ENCODE measurements at regions of chr18 and their contacts with region 1.

Region 1: DNA sequence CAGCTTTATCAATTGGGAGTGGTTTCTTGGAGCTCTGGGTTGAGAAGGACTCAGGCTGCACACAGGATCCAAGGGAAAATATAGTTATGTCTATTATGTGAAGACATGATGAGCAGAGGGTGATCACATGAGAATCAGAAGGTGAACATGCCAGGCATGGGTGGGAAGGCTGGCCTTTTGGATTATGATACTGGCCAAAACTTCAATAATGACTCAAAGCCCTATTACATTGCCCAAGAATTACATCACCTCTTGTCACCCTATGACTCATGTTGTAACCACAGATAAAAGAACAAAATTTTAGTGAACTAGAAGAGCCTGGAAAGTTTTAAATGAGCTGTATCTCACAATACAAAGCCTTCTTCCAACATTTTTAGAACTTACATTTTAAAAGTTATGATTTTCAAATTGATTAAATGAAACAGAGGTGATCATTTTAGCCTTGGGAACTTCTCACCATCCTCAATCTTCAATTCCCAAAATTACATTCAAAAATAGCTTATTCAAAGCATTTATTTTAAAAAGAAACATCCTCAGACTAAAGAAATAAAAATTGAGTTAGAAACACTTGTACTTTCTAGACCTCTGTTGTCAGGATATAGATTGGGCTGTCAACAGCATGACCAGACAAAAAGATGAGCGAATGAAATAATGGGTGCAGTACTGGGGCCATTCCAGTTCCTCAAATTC is 428.3 kb downstream of the MBD2 start:
- DNase-seq: peak; percentile 89
- ATAC-seq: peak; percentile 89
- H3K4me3 ChIP-seq: no peak overlapping the region
- H3K27ac ChIP-seq: peak overlapping the region; percentile 65
- H3K4me1 ChIP-seq: peaks cover 16% of the 10 kb centered on the region
- H3K27me3 ChIP-seq: no peaks in the 10 kb centered on the region
- CTCF ChIP-seq: no peak

Region 2: GRCh38 chr18:53745224-53745967 is 50.8 kb before region 1 on chr18:
- CTCF ChIA-PET with region 1: no interaction called
- POLR2A ChIA-PET with region 1: no interaction called
- intact Hi-C with region 1: loop called (anchors 5 kb)
- DNase-seq: peak; percentile 93
- ATAC-seq: peak; percentile 91
- H3K4me3 ChIP-seq: peak overlapping the region; percentile 13; the same call in 1 of the 2 replicates
- H3K27ac ChIP-seq: peak overlapping the region; percentile 69
- H3K4me1 ChIP-seq: peaks cover 45% of the 10 kb centered on the region
- H3K27me3 ChIP-seq: no peaks in the 10 kb centered on the region
- CTCF ChIP-seq: no peak